T-cell (primary cell): ENCODE measurements at regions of chr10 and their contacts with region 1.

Region 1: DNA sequence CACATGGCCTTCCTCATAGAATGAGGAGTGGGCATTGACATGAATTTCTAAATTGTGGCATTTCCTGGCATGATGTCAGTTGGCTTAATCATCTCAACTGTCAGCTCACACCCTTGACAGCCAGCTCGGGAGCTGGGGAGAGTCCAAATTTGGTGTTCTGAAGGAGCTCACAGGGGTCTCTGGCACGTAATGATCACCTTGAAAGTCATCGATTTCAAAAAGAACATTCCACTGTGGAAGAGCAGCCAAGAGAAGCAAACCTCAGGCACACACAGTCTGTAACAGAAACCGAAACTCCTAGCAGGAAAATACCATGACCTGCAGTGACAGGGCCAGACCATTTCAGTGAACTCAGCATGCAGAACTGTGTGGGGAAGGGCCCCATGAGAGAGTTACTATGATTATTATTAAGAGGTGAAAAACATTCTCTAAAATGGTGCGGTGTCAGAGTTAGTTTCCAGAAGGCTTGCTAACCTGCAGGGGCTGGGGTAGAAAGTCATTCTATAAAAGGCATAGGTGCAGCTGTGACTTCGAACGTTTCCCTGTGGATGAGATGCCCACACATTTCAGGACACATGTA is 26.4 kb upstream of the KLF6 start:
- DNase-seq: peak in 13 of 35 experiments; percentile 6 to 71 (median 19)
- ATAC-seq: peak; percentile 34 to 65 (median 48)
- H3K4me3 ChIP-seq: peak overlapping the region in 1 of 2 donors; percentile 19
- H3K4me3 Mint-ChIP-seq: peak overlapping the region; percentile 45 to 67 (median 63)
- H3K27ac ChIP-seq: peak overlapping the region; percentile 98
- H3K27ac Mint-ChIP-seq: no peak overlapping the region
- H3K4me1 ChIP-seq: peaks cover 33 to 55% of the 10 kb centered on the region in 2 experiments
- H3K4me1 Mint-ChIP-seq: peaks cover 22 to 86% (median 60%) of the 10 kb centered on the region in 3 donors
- H3K27me3 ChIP-seq: no peaks in the 10 kb centered on the region
- H3K27me3 Mint-ChIP-seq: no peaks in the 10 kb centered on the region

Region 2: DNA sequence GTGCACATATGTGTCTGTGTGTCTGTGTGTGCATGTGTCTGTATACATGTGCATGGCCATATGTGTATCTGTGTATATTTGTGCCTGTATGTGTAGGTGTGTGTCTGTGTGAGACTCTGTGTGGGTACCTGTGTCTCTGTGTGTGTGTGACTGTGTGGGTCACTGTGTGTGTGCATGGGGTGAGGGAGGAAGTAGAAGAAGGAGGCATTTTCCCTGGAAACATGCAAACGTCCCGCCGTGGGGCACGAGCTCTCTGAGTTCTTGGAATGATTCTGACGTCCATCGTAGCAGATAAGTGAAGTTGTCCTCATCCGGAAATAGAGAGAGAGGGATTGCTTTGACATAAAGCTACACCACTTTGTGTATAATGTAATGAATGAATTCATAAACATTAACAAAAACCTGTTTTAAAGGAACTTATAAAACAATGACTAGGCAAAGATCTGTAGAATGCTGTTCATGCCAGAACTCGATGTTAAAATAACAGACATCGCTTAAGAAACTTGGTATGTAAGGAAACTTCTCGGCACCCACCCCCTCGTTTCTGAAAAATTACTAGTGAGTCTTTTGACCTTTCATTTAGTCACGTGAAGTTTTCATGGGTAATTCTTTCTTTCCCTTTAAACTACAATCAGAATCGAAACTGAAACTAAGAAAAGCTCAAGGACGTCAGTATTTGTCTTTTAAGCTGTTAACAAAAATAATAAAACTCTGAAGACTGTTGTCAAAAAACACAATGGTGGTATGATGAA is 17.2 kb after region 1 on chr10:
- CTCF ChIA-PET with region 1: interaction called, 3 to 7 read pairs
- POLR2A ChIA-PET with region 1: interaction called in 1 of 2 experiments, 10 read pairs
- DNase-seq: peak in 2 of 35 experiments; percentile 10 to 71
- ATAC-seq: peak; percentile 50 to 73 (median 60)
- H3K4me3 ChIP-seq: peak overlapping the region; percentile 6 to 35
- H3K4me3 Mint-ChIP-seq: peak overlapping the region; percentile 69 to 79 (median 73)
- H3K27ac ChIP-seq: peak overlapping the region; percentile 85
- H3K27ac Mint-ChIP-seq: peak overlapping the region; percentile 88 to 91
- H3K4me1 ChIP-seq: peaks cover 6 to 16% of the 10 kb centered on the region in 2 experiments
- H3K4me1 Mint-ChIP-seq: peaks cover 33 to 37% (median 35%) of the 10 kb centered on the region in 3 donors
- H3K27me3 ChIP-seq: no peaks in the 10 kb centered on the region
- H3K27me3 Mint-ChIP-seq: no peaks in the 10 kb centered on the region

Region 3: GRCh38 chr10:3852147-3852904 is 40.9 kb after region 1 on chr10:
- CTCF ChIA-PET with region 1: no interaction called
- POLR2A ChIA-PET with region 1: interaction called in 1 of 2 experiments, 15 read pairs
- DNase-seq: peak in 31 of 35 experiments; percentile 20 to 79 (median 45)
- ATAC-seq: peak; percentile 81 to 95 (median 88)
- H3K4me3 ChIP-seq: no peak overlapping the region
- H3K4me3 Mint-ChIP-seq: peak overlapping the region in 1 of 3 donors; percentile 42
- H3K27ac ChIP-seq: peak overlapping the region; percentile 85
- H3K27ac Mint-ChIP-seq: peak overlapping the region; percentile 87 to 90
- H3K4me1 ChIP-seq: peaks cover 0 to 20% of the 10 kb centered on the region in 2 experiments
- H3K4me1 Mint-ChIP-seq: peaks cover 19 to 36% (median 28%) of the 10 kb centered on the region in 3 donors
- H3K27me3 ChIP-seq: no peaks in the 10 kb centered on the region
- H3K27me3 Mint-ChIP-seq: no peaks in the 10 kb centered on the region

Region 4: GRCh38 chr10:3873728-3874461 is 62.5 kb after region 1 on chr10:
- CTCF ChIA-PET with region 1: interaction called in 1 of 2 experiments, 3 read pairs
- POLR2A ChIA-PET with region 1: interaction called, 4 to 17 read pairs
- DNase-seq: peak in 9 of 35 experiments; percentile 13 to 87 (median 25)
- ATAC-seq: peak in 3 of 4 experiments; percentile 24 to 70 (median 55)
- H3K4me3 ChIP-seq: no peak overlapping the region
- H3K4me3 Mint-ChIP-seq: peak overlapping the region in 2 of 3 donors; percentile 9 to 25
- H3K27ac ChIP-seq: peak overlapping the region; percentile 98
- H3K27ac Mint-ChIP-seq: peak overlapping the region; percentile 81 to 99
- H3K4me1 ChIP-seq: peaks cover 36 to 42% of the 10 kb centered on the region in 2 experiments
- H3K4me1 Mint-ChIP-seq: peaks cover 57 to 70% (median 62%) of the 10 kb centered on the region in 3 donors
- H3K27me3 ChIP-seq: no peaks in the 10 kb centered on the region
- H3K27me3 Mint-ChIP-seq: no peaks in the 10 kb centered on the region

Region 5: GRCh38 chr10:3950676-3951275 is 139.4 kb after region 1 on chr10:
- CTCF ChIA-PET with region 1: no interaction called
- POLR2A ChIA-PET with region 1: interaction called in 1 of 2 experiments, 11 read pairs
- DNase-seq: peak in 29 of 35 experiments; percentile 17 to 82 (median 37)
- ATAC-seq: peak; percentile 53 to 67 (median 64)
- H3K4me3 ChIP-seq: no peak overlapping the region
- H3K4me3 Mint-ChIP-seq: no peak overlapping the region
- H3K27ac ChIP-seq: peak overlapping the region; percentile 50
- H3K27ac Mint-ChIP-seq: peak overlapping the region; percentile 48 to 88
- H3K4me1 ChIP-seq: peaks cover 13 to 46% of the 10 kb centered on the region in 2 experiments
- H3K4me1 Mint-ChIP-seq: peaks cover 33 to 65% (median 50%) of the 10 kb centered on the region in 3 donors
- H3K27me3 ChIP-seq: no peaks in the 10 kb centered on the region
- H3K27me3 Mint-ChIP-seq: no peaks in the 10 kb centered on the region